ENCODE measurements at regions of chr12 and their contacts with region 1.

Region 1: DNA sequence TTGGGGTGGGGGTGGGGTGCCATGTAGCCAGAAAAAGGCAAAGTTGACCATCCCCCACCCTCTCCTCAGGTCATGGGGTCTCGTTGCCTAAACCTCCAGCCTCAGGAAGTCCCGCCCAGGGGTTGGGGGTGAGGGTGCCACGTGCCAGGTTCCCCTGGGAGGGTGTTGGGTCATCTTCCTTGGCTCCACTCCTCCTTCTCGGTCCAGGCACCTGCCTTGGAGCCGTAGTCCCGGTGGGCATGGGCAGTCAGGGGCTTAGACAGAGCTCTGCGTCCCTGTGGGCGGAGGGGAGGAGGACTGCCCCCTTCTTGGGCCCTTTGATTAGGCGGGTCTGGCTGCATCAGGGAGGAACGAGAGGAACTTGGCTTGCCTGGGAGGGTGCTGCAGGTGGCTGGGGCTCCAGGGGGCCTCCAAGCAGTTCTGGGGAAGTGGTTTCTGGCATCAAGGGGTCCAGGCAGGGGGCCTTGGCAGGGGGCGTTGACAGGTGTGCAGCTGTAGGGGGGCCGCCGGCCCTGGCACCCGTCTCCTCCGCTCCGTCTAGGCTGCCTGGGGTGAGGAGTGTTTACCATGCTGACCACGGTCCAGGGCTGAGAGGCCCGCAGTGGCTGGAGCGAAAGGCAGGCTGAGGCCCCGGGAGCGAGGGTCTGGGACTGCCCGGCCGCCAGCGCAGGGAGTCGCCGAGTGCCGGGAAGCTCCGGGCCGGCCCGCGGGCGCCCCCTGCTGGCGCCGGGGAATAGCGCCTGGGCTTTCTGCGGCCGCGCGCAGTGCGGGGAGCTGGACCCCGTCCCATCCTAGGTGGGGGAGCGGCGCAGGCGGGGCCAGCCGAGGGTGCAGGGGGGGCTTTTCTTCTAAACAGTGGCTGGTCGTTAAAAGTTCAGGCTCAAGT is 7.9 kb downstream of the SETD1B start:
- DNase-seq: peak in 4 of 10 donors; percentile 57 to 86 (median 65)
- H3K4me3 ChIP-seq: peak overlapping the region; percentile 37 to 74 (median 62)
- H3K27ac ChIP-seq: peak overlapping the region in 48 of 59 donors; percentile 2 to 84 (median 64)
- H3K27me3 ChIP-seq: no peaks in the 10 kb centered on the region
- CTCF ChIP-seq: peak; percentile 87 to 100 (median 98)

Region 2: GRCh38 chr12:121697098-121697698 is 114.5 kb before region 1 on chr12:
- intact Hi-C with region 1: loop called in 1 of 2 experiments (anchors 5 kb)
- DNase-seq: peak in 1 of 10 donors; percentile 27
- H3K4me3 ChIP-seq: peak overlapping the region in 4 of 59 donors; percentile 12 to 24 (median 16)
- H3K27ac ChIP-seq: no peak overlapping the region
- H3K27me3 ChIP-seq: peaks cover 0 to 3% (median 0%) of the 10 kb centered on the region in 45 donors
- CTCF ChIP-seq: peak; percentile 51 to 91 (median 79)

Region 3: GRCh38 chr12:121773011-121773777 is 38.5 kb before region 1 on chr12:
- intact Hi-C with region 1: loop called (anchors 1 to 2 kb)
- DNase-seq: peak in 8 of 10 donors; percentile 39 to 77 (median 58)
- H3K4me3 ChIP-seq: no peak overlapping the region
- H3K27ac ChIP-seq: peak overlapping the region in 4 of 59 donors; percentile 22 to 59 (median 42)
- H3K27me3 ChIP-seq: no peaks in the 10 kb centered on the region
- CTCF ChIP-seq: peak; percentile 63 to 89 (median 78)

Region 4: GRCh38 chr12:121793838-121794533 is 17.7 kb before region 1 on chr12:
- intact Hi-C with region 1: loop called (anchors 1 kb)
- DNase-seq: peak; percentile 69 to 93 (median 86)
- H3K4me3 ChIP-seq: peak overlapping the region; percentile 32 to 76 (median 61)
- H3K27ac ChIP-seq: peak overlapping the region in 54 of 59 donors; percentile 9 to 100 (median 100)
- H3K27me3 ChIP-seq: no peaks in the 10 kb centered on the region
- CTCF ChIP-seq: peak in 55 of 56 donors; percentile 77 to 100 (median 98)

Region 5: DNA sequence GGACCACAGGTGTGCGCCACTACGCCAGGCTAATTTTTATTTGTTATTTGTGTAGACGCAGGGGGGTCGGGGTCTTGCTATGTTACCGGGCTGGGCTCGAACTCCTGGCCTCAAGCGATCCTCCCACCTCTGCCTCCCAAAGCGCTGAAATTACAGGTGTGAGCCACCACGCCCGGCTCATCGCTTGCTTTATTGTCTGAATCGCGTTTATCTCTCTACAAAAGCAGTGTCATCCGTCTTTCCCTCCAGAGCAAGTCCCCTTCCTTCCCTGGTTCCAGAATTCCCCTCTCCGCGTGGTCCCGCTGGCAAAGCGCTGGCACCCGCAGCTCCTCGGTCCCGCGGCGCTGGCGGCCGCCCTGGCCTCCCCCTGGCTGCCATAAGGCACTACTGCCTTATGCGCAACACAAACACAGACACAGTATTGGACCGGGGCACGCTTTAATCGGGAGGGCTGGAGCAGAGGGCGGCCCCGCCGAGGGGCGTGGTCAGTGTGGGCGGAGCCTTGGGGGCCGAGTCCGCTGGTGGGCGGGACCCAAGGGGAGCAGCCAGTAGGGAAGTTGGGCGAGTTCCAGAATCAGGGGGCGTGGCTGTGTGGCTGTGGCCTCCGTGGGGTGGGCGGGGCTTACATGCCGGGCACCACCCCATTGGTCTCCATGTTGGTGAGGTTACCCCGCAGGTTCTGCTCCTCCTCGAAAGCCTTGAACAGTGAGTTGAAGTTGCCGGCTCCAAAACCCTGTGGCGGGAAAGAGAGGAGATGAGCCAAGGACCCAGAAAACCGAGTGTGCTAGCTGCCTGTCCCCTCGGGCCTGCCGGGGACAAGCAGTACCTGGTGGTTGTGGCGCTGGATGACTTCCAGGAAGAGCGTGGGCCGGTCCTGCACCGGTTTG is 27.7 kb after region 1 on chr12:
- intact Hi-C with region 1: loop called in 1 of 2 experiments (anchors 2 kb)
- DNase-seq: peak; percentile 91 to 97 (median 94)
- H3K4me3 ChIP-seq: peak overlapping the region; percentile 45 to 83 (median 67)
- H3K27ac ChIP-seq: peak overlapping the region in 28 of 59 donors; percentile 1 to 76 (median 30)
- H3K27me3 ChIP-seq: no peaks in the 10 kb centered on the region
- CTCF ChIP-seq: peak in 44 of 56 donors; percentile 2 to 59 (median 33)